Left ventricle myocardium superior (tissue), 1 donor: ENCODE measurements at regions of chr3 and their contacts with region 1.

Region 1: GRCh38 chr3:66816090-66816761 is 181.9 kb upstream of the KBTBD8 start:
- DNase-seq: no peak
- ATAC-seq: peak; percentile 82

Region 2: GRCh38 chr3:66276705-66277274 is 539.4 kb before region 1 on chr3:
- intact Hi-C with region 1: loop called (anchors 5 kb)
- DNase-seq: no peak
- ATAC-seq: peak; percentile 48

Region 3: DNA sequence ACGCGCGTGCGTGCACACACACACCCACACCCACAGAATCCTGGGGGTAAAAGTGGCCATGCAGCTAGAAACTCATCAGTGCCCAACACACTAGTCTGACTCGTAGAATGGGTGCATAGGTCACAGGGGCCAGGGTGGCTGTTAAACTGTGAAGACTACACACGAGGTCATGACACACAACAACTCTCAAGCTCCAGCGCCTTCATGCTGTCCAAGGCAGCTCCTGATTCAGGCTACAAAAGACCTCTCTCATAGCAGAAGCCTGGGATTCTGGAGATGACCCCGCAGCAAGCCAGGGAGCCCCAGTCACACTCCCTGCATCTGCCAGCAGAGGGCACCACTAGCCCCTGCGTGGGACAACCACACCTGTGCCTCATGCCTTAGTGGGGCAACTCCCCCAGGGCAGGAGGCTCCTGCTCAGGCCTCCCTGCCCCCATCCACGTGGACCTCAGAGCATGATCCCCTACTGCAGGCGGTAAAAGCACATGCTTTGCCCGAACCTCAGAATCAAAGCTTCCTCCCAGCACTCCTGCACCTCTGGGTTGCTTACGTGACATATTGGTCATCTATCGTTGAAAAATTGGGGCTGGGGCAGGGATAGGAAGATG is 408.5 kb before region 1 on chr3:
- intact Hi-C with region 1: loop called (anchors 10 kb)
- DNase-seq: peak; percentile 87
- ATAC-seq: peak; percentile 57

Region 4: DNA sequence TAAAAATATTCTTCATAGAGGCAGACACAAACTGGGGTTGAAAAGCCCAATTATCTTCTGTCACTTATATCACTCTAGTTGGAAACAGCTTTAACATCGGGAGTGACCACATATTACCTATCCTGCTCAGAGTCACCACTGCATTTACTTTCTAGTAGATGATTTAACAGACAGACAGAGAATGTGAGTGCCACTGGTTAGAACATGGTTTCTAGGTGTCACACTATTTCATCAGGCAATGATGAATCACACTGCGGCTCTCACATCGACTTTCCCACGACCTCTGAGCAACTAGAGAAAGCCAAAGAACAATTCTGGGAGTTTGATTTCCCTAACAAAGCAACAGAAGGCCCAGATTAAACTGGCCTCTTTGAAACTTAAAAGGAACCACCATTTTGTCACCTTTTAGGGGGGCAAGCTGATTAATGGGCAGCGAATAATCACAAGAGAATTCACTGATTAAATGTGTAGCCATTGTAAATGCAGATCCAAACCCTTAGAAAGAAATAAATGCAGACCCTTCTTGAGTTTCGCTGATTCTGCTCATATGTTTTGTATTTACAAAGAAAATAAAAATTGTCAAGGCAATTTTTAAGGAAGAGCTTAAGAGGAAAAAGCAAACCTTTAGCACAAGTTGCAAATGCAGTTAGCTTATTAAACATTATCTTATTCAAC is 69.2 kb after region 1 on chr3:
- intact Hi-C with region 1: no loop called
- DNase-seq: no peak
- ATAC-seq: no peak